CD14-positive monocyte (primary cell): ENCODE measurements at regions of chr22 and their contacts with region 1.

Region 1: DNA sequence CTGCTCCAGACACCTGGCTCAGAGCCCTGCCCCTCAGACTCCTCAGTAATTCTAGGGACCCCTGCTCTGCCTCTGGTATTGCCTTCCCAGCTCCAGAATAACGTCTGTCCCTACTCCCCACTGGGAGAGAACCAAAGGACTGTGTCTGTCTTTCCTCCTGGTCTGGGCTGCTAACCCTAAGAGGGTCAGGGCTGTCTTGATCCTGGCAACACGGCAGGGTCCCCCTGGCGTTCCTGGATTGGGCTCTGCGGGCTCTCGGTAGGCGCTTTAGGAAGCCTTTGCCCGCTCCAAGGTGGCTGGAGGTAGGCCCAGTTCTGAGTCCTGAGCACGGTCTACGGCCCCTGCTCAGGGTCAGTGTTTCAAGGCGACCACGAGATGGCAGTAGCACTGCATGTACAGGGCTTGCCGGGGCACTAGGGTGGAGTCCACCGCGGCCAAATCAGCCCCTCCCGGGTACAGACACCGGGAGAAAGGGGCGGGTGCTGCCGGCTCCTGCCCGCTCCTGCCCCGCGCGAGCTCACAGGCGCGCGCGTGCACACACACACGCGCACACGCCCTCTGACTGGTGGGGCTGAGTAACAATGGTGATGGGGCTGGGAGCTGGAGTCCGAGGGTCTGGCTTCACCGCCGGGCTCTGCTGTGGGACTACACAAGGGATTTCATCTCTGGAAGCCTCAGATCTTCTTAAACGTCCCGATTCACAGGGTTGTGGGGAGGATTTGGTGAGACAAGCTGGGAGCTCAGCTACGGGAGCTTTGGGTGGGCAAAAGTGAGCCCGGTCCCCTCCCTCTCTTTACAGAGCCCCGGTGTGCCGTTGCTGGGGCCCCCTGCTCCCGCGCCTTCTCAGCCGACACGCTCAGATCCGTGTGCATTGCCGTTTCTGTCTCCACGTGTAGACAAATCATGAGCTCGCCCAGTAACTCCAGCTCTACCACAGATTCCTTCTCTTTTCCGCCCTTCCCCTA is 30.1 kb upstream of the HMOX1 start:
- DNase-seq: peak; percentile 90 to 93 (median 91)
- H3K4me3 ChIP-seq: peak overlapping the region; percentile 39 to 73 (median 52)
- H3K4me3 Mint-ChIP-seq: peak overlapping the region; percentile 85 to 91
- H3K27ac ChIP-seq: peak overlapping the region; percentile 65 to 90
- H3K27ac Mint-ChIP-seq: peak overlapping the region; percentile 80 to 98 (median 97)
- H3K4me1 ChIP-seq: peaks cover 53 to 57% of the 10 kb centered on the region in 2 donors
- H3K4me1 Mint-ChIP-seq: peaks cover 64% of the 10 kb centered on the region
- H3K27me3 ChIP-seq: no peaks in the 10 kb centered on the region
- H3K27me3 Mint-ChIP-seq: peaks cover 0 to 2% (median 0%) of the 10 kb centered on the region in 3 donors
- CTCF ChIP-seq: peak; percentile 91

Region 2: DNA sequence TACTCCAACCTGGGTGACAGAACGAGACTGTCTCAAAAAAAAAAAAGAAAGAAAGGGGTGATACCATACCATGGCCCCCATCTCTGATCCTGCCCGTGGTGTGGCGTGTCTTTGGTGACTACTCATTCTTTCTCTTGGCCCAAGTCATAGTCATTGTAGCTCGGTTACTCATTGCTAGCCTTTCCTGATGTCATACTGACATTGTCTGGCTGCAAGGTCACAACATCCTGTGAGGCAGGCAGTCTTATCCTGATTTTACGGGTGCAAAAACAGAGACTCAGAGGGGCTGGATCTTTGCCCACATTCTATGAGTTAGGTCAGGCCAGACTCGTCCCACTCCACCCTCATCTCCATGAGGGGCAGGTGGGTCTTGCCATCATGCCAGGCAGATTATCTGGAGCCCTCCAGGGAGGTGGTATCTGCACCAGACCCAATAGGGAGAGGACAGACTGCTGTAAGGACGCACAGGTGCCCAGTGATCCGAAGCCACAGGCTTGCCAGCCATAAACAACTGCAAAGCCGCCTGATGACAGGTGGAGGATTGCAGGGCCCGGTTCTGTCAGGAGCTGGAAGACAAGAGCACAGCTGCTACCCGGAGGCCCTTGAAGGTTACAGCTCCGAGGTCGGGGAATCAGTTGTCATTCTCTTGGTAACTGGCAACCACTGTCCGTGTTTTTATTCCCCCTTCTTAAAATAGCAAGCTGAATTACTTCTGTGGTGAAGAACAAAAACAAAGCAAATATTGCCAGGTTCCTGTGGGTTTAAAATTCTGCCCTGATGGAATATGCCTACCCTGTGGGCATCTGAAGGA is 37.3 kb before region 1 on chr22:
- intact Hi-C with region 1: no loop called
- DNase-seq: peak in 2 of 3 donors; percentile 26 to 46
- H3K4me3 ChIP-seq: no peak overlapping the region
- H3K4me3 Mint-ChIP-seq: no peak overlapping the region
- H3K27ac ChIP-seq: peak overlapping the region in 1 of 2 donors; percentile 50
- H3K27ac Mint-ChIP-seq: peak overlapping the region in 4 of 7 donors; percentile 65 to 95 (median 74)
- H3K4me1 ChIP-seq: peaks cover 6 to 16% of the 10 kb centered on the region in 2 donors
- H3K4me1 Mint-ChIP-seq: peaks cover 32% of the 10 kb centered on the region
- H3K27me3 ChIP-seq: no peaks in the 10 kb centered on the region
- H3K27me3 Mint-ChIP-seq: peaks cover 0 to 2% (median 0%) of the 10 kb centered on the region in 3 donors
- CTCF ChIP-seq: no peak

Region 3: DNA sequence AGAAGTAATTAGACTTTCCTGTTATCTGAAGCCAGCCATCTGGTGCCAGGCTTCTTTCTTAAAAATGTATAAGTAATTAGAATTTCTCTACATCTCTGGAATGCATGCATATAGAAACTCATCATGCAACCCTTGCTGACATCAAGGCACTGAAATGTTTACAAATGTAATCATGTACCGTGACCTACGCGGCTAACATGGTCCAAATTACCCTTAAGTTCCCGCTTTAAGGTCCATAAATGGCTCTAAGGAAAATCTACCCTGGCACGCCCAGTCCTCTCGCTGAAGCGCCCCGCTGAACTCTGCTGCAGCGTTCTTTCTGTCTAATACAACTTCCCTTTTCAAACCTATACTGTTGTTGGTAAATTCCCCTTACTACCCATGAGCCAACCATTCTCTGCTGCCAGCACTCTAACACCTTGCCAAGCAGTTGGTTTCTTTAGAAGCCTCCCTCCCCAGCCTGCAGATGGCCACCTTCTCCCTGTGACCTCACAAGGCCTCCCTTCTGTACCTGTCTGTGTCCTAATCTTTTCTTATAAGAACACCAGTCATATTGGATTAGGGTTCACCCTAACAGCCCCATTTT is 16.6 kb after region 1 on chr22:
- intact Hi-C with region 1: loop called in 1 of 2 experiments (anchors 2 kb)
- DNase-seq: peak; percentile 80 to 88 (median 86)
- H3K4me3 ChIP-seq: peak overlapping the region in 1 of 3 experiments; percentile 14
- H3K4me3 Mint-ChIP-seq: peak overlapping the region in 1 of 2 donors; percentile 53
- H3K27ac ChIP-seq: peak overlapping the region; percentile 25 to 67
- H3K27ac Mint-ChIP-seq: peak overlapping the region; percentile 77 to 89 (median 87)
- H3K4me1 ChIP-seq: peaks cover 55 to 65% of the 10 kb centered on the region in 2 donors
- H3K4me1 Mint-ChIP-seq: peaks cover 52% of the 10 kb centered on the region
- H3K27me3 ChIP-seq: no peaks in the 10 kb centered on the region
- H3K27me3 Mint-ChIP-seq: peaks cover 0 to 9% (median 3%) of the 10 kb centered on the region in 3 donors
- CTCF ChIP-seq: no peak

Region 4: DNA sequence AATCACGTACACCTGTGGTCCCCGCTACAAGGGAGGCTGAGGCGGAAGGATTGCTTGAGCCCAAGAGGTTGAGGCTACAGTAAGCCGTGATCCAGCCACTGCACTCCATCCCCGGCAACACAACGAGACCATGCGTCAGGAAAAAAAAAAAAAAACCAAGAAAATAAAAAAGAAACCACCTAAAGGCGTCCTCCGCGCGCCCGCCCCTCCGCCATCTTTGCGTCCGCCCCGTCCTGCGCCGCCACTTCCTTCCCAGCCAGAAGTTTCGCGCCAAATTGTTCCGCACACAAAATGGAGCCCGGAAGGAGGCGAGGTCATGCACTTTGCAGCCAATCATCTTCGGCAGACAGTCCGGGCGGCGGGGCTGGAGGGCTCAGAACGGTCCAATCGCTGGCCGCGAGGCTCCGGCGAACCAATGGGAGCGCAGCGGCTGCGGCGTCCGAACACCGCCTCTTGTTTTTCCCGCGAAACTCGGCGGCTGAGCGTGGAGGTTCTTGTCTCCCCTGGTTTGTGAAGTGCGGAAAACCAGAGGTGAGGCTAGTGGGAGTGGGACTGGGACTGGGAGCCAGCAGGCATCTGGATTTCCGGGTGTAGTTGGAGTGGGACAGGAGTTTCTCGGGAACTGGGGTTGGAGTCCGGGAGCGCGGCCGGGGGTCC is 49.0 kb after region 1 on chr22 and contains the start of gene MCM5:
- intact Hi-C with region 1: loop called in 1 of 2 experiments (anchors 5 kb)
- DNase-seq: peak; percentile 96 to 97 (median 96)
- H3K4me3 ChIP-seq: peak within 1 kb of the TSS; percentile 53 to 99 (median 93)
- H3K4me3 Mint-ChIP-seq: peak within 1 kb of the TSS; percentile 97
- H3K27ac ChIP-seq: peak within 1 kb of the TSS; percentile 47 to 82
- H3K27ac Mint-ChIP-seq: peak within 1 kb of the TSS; percentile 90 to 97 (median 94)
- H3K4me1 ChIP-seq: peaks cover 35 to 62% of the 10 kb centered on the region in 2 donors
- H3K4me1 Mint-ChIP-seq: peaks cover 49% of the 10 kb centered on the region
- H3K27me3 ChIP-seq: no peaks in the 10 kb centered on the region
- H3K27me3 Mint-ChIP-seq: no peaks in the 10 kb centered on the region
- CTCF ChIP-seq: no peak
- polyA plus RNA-seq, gene MCM5: 23.4 to 39.8 (median 25.5) TPM

Region 5: DNA sequence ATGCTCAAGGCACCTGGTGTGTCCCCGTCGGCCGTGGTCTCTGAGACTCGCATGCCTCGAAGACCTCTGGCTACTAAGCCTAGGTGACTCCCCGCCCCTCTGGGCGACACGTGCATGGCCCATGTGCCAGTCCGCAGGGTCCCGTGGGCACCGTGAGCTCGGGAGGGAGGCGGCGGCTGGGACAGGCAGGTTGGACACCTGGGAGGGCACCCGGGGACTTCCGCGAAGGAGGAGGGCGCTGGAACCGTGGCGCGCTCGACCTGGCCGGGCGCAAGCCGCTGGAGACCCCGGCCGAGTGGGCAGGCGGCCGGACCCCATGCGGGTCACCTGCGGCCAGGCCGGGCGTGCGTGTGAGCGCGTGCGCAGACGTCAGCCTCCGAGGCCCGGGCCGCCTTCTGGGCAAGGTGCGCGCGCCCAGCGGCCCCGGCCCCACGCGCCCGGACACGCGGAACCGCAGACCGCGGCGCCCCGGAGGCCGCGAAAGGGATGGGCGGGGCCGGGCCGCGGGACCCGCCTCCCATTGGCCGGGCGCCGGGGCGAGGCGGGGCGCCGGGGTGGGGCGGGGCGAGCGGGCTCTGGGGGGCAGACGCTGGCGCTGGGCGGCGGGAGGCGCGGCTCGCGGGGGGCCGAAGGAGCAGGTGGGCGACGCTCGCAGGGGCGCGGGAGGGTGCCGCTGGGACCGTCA is 189.2 kb after region 1 on chr22:
- intact Hi-C with region 1: loop called in 1 of 2 experiments (anchors 10 kb)
- DNase-seq: peak; percentile 24 to 55 (median 37)
- H3K4me3 ChIP-seq: peak overlapping the region; percentile 24 to 70 (median 40)
- H3K4me3 Mint-ChIP-seq: peak overlapping the region; percentile 72 to 87
- H3K27ac ChIP-seq: no peak overlapping the region
- H3K27ac Mint-ChIP-seq: no peak overlapping the region
- H3K4me1 ChIP-seq: peaks cover 36 to 40% of the 10 kb centered on the region in 2 donors
- H3K4me1 Mint-ChIP-seq: peaks cover 34% of the 10 kb centered on the region
- H3K27me3 ChIP-seq: peaks cover 23 to 56% of the 10 kb centered on the region in 2 donors
- H3K27me3 Mint-ChIP-seq: peaks cover 39 to 58% (median 44%) of the 10 kb centered on the region in 3 donors
- CTCF ChIP-seq: no peak

Region 6: DNA sequence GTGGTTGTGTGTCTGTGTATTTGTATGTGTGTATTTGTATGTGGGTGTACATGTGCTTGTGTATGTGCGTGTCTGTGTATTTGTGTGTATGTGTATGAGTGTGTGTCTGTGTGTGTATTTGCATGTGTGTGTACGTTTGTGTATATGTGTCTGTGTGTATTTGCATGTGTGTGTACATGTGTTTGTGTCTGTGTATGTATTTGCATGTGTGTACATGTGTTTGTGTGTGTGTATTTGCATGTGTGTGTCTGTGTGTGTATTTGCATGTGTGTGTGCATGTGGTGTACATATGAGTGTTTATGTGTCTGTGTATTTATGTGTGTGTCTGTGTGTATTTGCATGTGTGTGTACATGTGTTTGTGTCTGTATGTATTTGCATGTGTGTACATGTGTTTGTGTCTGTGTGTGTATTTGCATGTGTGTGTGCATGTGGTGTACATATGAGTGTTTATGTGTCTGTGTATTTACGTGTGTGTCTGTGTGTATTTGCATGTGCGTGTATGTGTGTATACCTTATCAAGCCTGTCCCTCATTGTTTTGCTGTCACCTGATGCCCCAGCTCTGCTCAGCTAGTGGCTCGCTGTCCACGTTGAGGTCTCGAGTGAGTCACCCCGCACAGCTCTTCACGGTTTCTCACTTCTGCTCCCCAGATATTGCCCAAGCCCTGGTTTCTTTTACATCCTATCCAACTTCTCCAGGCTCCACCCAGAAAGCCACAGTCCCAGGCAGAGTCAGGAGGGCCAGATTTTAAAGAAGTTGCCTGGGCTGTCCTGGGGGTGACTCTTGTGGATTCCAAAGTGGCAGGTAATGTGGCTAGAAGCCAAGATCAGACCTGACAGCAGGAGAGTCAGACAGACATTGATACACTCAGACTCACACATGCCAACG is 251.2 kb after region 1 on chr22:
- intact Hi-C with region 1: loop called in 1 of 2 experiments (anchors 5 kb)
- DNase-seq: peak; percentile 95 to 97 (median 96)
- H3K4me3 ChIP-seq: peak overlapping the region in 1 of 3 experiments; percentile 14
- H3K4me3 Mint-ChIP-seq: peak overlapping the region; percentile 20 to 39
- H3K27ac ChIP-seq: peak overlapping the region; percentile 61 to 87
- H3K27ac Mint-ChIP-seq: no peak overlapping the region
- H3K4me1 ChIP-seq: peaks cover 68 to 73% of the 10 kb centered on the region in 2 donors
- H3K4me1 Mint-ChIP-seq: peaks cover 30% of the 10 kb centered on the region
- H3K27me3 ChIP-seq: no peaks in the 10 kb centered on the region
- H3K27me3 Mint-ChIP-seq: peaks cover 8 to 12% (median 9%) of the 10 kb centered on the region in 3 donors
- CTCF ChIP-seq: no peak

Region 7: DNA sequence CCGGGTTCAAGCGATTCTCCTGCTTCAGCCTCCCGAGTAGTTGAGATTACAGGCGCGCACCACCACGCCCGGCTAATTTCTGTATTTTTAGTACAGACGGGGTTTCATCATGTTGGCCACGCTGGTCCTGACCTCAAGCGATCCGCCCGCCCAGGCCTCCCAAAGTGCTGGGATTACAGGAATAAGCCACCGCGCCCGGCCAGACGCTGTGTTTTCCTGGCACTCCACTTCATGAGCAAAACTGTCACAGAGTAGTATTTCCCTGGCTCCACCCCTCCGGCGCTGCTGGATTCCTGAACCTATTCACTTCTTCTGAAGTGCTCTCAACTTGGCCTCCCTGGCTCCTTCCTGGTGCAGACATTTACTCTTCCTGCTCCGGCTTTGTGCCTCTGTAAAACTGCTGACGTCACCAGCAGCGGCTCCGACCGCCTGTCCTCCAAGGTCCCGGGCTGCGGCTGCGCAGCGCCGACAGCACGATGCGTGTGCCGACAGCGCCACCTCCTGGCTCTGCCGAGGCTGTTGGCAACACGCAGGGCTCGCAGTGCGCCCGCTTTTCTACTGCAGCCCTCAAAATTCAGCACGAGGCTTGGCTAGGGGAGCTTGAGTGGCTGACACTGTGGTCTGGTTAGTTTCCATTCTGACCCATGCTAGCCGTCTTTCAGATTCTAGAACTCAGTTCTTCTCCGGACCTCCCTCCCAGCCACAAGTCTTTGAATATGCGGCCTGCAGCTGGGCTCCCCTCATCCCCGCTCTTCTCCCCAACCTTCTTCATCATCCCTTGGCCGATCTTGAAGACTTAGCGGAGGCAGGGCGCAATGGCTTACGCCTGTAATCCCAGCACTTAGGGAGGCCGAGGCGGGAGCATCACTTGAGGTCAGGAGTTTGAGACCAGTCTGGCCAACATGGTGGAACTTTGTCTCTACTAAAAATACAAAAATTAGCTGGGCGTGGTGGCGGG is 773.1 kb after region 1 on chr22:
- intact Hi-C with region 1: loop called (anchors 5 to 10 kb)
- DNase-seq: peak; percentile 96
- H3K4me3 ChIP-seq: peak overlapping the region in 2 of 3 experiments; percentile 22 to 63
- H3K4me3 Mint-ChIP-seq: peak overlapping the region; percentile 70 to 92
- H3K27ac ChIP-seq: peak overlapping the region; percentile 65 to 85
- H3K27ac Mint-ChIP-seq: peak overlapping the region; percentile 91 to 98 (median 96)
- H3K4me1 ChIP-seq: peaks cover 16 to 19% of the 10 kb centered on the region in 2 donors
- H3K4me1 Mint-ChIP-seq: peaks cover 17% of the 10 kb centered on the region
- H3K27me3 ChIP-seq: no peaks in the 10 kb centered on the region
- H3K27me3 Mint-ChIP-seq: peaks cover 6 to 11% (median 8%) of the 10 kb centered on the region in 3 donors
- CTCF ChIP-seq: peak; percentile 97